Activated CD4-positive, alpha-beta T cell treated with anti-CD3 and anti-CD28 coated beads, Interleukin-2, amount 10 ng/mL, durations not matched to agents 24 days and 14 days (primary cell): ENCODE measurements at regions of chr1 and their contacts with region 1.

Region 1: GRCh38 chr1:89719502-89720306 is 86.8 kb downstream of the LRRC8C start:
- DNase-seq: peak; percentile 77
- H3K4me3 Mint-ChIP-seq: peak overlapping the region; percentile 74
- H3K27ac Mint-ChIP-seq: peak overlapping the region; percentile 98
- H3K4me1 Mint-ChIP-seq: peaks cover 66% of the 10 kb centered on the region
- H3K27me3 Mint-ChIP-seq: no peaks in the 10 kb centered on the region

Region 2: DNA sequence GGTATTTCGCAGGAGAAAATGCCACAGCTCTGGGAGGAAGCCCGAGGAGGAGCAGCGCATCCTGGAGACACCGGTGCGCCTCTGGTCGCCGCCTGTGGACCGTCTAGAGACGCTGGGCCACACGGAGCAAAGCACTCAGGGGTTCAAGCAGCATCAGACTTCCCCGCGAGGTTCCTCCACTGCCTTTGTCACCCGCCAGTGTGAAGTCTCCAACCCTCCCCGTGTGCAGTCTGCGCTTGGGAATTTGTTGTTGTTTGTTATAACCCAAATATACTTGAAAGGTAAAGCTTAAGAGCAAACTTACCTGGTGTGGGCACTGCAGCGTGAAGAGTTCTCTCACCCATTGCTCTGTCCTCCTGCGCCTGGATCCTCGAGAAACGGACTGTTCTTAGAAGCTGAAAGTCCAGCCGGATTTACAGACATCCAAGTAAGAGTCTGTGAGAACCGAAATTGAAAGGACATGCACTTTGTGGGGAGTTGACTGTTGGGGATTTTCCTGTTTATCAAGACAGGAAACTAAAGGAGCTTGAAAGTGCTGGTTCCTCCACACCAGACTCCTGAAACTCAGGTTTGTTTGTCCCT is 521.1 kb before region 1 on chr1 and contains the start of gene GBP4:
- intact Hi-C with region 1: loop called (anchors 5 kb)
- DNase-seq: peak; percentile 87
- H3K4me3 Mint-ChIP-seq: peak within 1 kb of the TSS; percentile 91
- H3K27ac Mint-ChIP-seq: peak within 1 kb of the TSS; percentile 96
- H3K4me1 Mint-ChIP-seq: peaks cover 67% of the 10 kb centered on the region
- H3K27me3 Mint-ChIP-seq: no peaks in the 10 kb centered on the region
- total RNA-seq, gene GBP4: 29.5 and 33.5 TPM in 2 replicates

Region 3: DNA sequence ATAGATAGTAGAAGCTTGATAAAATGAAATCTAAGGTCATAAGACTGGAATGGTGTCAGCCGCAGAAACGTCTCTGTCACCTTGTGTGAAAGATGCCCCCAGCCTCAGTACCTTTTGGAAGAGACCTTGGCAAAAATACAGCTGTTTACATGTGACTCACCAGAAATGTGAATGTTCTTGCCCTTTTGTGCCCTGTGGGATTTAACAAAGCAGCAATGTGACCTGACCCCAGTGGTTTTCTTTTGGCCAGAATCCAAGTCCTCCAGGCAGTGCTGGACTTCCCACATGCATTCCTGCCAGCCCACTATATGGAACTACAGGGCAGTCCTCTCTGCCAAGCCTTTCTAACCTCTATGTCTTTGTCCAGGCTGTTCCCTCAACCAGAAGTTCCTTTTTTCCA is 114.0 kb before region 1 on chr1:
- intact Hi-C with region 1: loop called (anchors 1 kb)
- DNase-seq: no peak
- H3K4me3 Mint-ChIP-seq: peak overlapping the region; percentile 64
- H3K27ac Mint-ChIP-seq: peak overlapping the region; percentile 99
- H3K4me1 Mint-ChIP-seq: peaks cover 86% of the 10 kb centered on the region
- H3K27me3 Mint-ChIP-seq: no peaks in the 10 kb centered on the region

Region 4: DNA sequence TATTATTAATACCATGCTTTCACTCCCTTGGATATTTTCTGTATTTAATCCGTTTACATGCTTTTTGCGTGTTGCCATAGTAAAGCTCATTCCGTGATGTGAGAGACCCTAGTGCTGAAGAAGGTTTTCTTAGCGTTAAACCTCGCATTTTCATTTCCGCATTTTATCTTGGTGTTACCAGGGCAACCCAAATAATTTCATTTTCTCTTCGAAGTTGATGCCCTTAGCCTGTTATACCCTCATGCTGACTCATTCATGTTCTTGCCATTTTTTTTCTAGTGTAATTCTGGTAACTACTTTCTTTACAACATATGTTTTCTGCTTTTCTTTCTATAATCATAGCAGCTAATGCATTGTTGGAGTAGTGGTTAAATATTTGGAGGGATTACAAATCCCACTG is 49.5 kb before region 1 on chr1:
- intact Hi-C with region 1: loop called (anchors 5 kb)
- DNase-seq: peak; percentile 70
- H3K4me3 Mint-ChIP-seq: peak overlapping the region; percentile 30
- H3K27ac Mint-ChIP-seq: peak overlapping the region; percentile 74
- H3K4me1 Mint-ChIP-seq: peaks cover 73% of the 10 kb centered on the region
- H3K27me3 Mint-ChIP-seq: no peaks in the 10 kb centered on the region

Region 5: GRCh38 chr1:89732643-89733222 is 13.0 kb after region 1 on chr1:
- intact Hi-C with region 1: loop called (anchors 1 kb)
- DNase-seq: no peak
- H3K4me3 Mint-ChIP-seq: peak overlapping the region; percentile 11
- H3K27ac Mint-ChIP-seq: peak overlapping the region; percentile 88
- H3K4me1 Mint-ChIP-seq: peaks cover 52% of the 10 kb centered on the region
- H3K27me3 Mint-ChIP-seq: no peaks in the 10 kb centered on the region

Region 6: DNA sequence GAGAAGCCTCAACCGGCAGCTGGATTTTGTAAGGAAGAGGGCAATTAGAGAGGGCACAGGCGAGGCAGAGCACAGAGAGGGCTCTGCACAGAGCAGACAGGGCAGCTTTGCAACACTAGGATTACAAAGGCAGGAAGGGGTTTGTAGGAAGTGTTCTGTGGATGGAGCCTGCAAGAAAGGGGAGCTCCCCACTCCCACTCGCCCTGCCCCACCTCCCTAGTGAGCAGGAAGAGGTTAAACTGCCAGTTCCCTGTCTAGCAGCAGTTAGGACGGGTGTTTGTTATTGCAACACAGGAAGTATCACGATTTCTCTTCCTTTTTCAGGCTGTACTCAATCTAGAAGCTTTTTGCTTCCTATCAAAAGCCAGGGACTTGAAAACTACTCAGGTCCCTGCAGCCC is 37.8 kb after region 1 on chr1:
- intact Hi-C with region 1: loop called (anchors 1 kb)
- DNase-seq: peak; percentile 86
- H3K4me3 Mint-ChIP-seq: peak overlapping the region; percentile 74
- H3K27ac Mint-ChIP-seq: peak overlapping the region; percentile 90
- H3K4me1 Mint-ChIP-seq: peaks cover 81% of the 10 kb centered on the region
- H3K27me3 Mint-ChIP-seq: no peaks in the 10 kb centered on the region